ENCODE measurements at regions of chr5 and their contacts with region 1.

Region 1: GRCh38 chr5:86880785-86881492 is 263.2 kb downstream of the COX7C start:
- DNase-seq: peak; percentile 56
- H3K4me3 Mint-ChIP-seq: no peak overlapping the region
- H3K27ac Mint-ChIP-seq: no peak overlapping the region
- H3K4me1 Mint-ChIP-seq: no peaks in the 10 kb centered on the region
- H3K27me3 Mint-ChIP-seq: peaks cover 5% of the 10 kb centered on the region

Region 2: GRCh38 chr5:86688406-86688805 is 192.5 kb before region 1 on chr5:
- CTCF ChIA-PET with region 1: no interaction called
- DNase-seq: no peak
- H3K4me3 Mint-ChIP-seq: no peak overlapping the region
- H3K27ac Mint-ChIP-seq: no peak overlapping the region
- H3K4me1 Mint-ChIP-seq: no peaks in the 10 kb centered on the region
- H3K27me3 Mint-ChIP-seq: no peaks in the 10 kb centered on the region

Region 3: DNA sequence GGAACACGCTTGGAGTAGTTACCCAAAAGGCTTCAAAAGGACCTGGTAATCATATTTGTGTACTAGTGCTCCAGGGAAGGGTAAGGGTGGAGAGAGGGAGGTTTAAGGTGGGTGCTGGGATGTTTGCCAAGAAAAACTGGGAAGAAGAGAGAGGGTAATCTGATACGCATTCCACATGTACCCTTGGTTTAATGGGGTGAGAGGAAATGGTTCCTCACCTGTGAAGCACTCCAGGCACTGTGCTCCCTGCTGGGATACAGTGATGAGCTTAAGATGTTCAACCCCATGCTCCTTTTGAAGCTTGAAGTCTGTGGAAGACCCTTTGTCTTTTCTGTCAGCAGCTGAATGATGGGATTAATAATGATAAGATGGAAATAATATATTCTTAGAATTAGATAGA is 164.8 kb before region 1 on chr5:
- CTCF ChIA-PET with region 1: no interaction called
- DNase-seq: no peak
- H3K4me3 Mint-ChIP-seq: no peak overlapping the region
- H3K27ac Mint-ChIP-seq: no peak overlapping the region
- H3K4me1 Mint-ChIP-seq: no peaks in the 10 kb centered on the region
- H3K27me3 Mint-ChIP-seq: no peaks in the 10 kb centered on the region

Region 4: DNA sequence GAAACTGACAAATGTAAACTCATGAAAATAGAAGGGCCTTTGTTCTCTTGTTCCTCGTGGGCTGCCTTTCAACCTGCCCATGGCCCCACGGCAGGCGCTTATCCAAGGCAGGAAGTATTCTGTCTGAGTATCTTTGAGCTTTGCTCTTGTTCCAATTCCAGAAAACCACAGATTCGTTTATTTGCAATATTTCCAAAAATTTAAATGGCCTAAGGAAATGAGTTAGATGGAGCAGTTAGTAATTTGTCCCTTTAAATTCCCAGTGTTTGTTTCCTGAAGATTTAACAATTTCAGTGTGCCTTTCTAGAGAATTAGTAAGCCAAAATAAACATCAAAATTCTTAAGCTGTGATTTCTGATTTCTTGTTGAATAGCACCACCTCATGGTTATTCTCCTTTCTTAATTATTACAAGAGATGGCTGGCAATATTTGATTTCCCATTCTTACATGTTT is 87.4 kb after region 1 on chr5:
- CTCF ChIA-PET with region 1: interaction called, 49 read pairs
- DNase-seq: no peak
- H3K4me3 Mint-ChIP-seq: no peak overlapping the region
- H3K27ac Mint-ChIP-seq: no peak overlapping the region
- H3K4me1 Mint-ChIP-seq: no peaks in the 10 kb centered on the region
- H3K27me3 Mint-ChIP-seq: peaks cover 22% of the 10 kb centered on the region